Heart left ventricle (tissue), 16 donors: ENCODE measurements at regions of chr9 and their contacts with region 1.

Region 1: DNA sequence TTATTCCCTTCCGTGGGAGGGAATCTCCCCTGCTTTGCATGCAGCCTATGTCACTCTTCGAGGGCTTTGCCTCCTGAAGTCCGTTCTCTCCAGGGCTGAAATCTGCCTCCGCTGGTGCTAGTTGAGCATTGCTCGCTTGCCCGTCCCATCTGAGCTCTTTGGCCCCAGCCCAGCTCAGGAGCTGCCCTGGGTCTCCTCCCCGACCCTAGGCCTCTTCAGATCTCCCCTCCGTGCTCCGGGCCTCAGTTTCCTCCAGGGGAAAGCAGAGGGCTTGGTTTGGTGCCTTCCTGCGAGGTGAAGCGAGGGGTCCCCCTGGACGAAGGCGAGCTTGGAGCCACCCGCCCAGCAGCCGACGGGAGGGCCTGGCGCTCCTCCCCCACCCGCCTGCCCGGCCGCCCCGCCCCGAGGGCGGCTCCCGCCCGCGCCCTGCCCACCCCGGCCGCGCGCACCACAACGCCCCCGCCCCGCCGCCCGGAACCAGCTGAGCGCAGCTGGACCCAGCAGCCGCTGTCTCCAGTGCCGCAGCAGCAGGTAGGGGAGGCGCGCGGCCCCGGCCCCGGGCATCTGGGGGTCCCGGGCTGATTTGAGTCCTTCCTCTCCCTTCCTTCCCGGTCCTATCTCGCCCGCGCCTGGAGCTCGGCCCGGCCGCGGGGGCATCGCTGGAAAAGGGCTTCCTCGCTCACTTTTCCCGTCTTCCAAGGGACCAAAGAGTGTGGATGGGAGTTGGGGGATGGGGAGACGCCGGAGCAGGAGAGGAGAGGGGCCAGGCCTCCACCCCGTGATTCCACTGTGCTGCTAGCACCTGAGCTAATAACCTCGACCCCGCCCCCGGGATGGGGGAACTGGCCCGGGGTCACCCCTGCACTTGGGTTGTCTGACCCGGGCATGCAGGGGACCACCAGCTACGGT is at the start of gene GSN:
- DNase-seq: peak; percentile 88 to 94 (median 90)
- ATAC-seq: peak; percentile 65 to 92 (median 84)
- H3K4me3 ChIP-seq: peak within 1 kb of the TSS; percentile 75 to 95 (median 88)
- H3K27ac ChIP-seq: peak within 1 kb of the TSS; percentile 30 to 96 (median 88)
- H3K4me1 ChIP-seq: peaks cover 6 to 65% (median 54%) of the 10 kb centered on the region in 12 donors
- H3K27me3 ChIP-seq: no peaks in the 10 kb centered on the region
- CTCF ChIP-seq: peak in 4 of 12 donors; percentile 5 to 32 (median 8)
- POLR2A ChIP-seq: peak in 1 of 2 donors; percentile 81
- total RNA-seq, gene GSN: 422 to 2,088 (median 703) TPM

Region 2: GRCh38 chr9:121121582-121122087 is 146.3 kb before region 1 on chr9:
- intact Hi-C with region 1: no loop called
- DNase-seq: peak; percentile 96 to 99 (median 97)
- ATAC-seq: peak; percentile 100
- H3K4me3 ChIP-seq: peak overlapping the region; percentile 2 to 66 (median 54)
- H3K27ac ChIP-seq: peak overlapping the region in 11 of 12 donors; percentile 7 to 83 (median 64)
- H3K4me1 ChIP-seq: peaks cover 0 to 41% (median 10%) of the 10 kb centered on the region in 12 donors
- H3K27me3 ChIP-seq: no peaks in the 10 kb centered on the region
- CTCF ChIP-seq: peak in 10 of 12 donors; percentile 6 to 54 (median 33)
- POLR2A ChIP-seq: peak in 1 of 2 donors; percentile 65

Region 3: DNA sequence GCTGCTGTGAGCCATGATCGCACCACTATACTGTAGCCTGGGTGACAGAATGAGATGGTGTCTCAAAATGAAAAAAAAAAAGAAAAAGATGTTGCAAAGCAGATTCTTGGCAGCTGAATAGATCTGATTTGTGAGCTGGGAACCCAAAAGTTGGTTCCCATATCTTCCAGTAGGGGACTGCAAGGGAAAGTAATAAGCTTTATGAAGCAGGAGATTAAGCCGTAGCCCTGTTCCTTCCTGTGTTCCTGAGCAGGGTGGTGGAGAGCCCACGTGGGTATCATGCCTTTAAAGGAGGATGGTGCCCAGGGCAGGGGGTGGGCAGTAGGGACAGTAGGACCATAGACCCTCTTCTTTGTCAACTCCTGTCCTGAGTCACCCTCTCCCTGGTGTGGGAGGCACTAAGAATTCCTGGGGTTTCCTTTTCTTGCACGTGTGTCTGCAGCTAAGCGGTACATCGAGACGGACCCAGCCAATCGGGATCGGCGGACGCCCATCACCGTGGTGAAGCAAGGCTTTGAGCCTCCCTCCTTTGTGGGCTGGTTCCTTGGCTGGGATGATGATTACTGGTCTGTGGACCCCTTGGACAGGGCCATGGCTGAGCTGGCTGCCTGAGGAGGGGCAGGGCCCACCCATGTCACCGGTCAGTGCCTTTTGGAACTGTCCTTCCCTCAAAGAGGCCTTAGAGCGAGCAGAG is 64.2 kb after region 1 on chr9:
- intact Hi-C with region 1: no loop called
- DNase-seq: no peak
- ATAC-seq: peak in 3 of 4 donors; percentile 2 to 32 (median 11)
- H3K4me3 ChIP-seq: no peak overlapping the region
- H3K27ac ChIP-seq: peak overlapping the region in 11 of 12 donors; percentile 41 to 98 (median 71)
- H3K4me1 ChIP-seq: peaks cover 0 to 76% (median 31%) of the 10 kb centered on the region in 12 donors
- H3K27me3 ChIP-seq: no peaks in the 10 kb centered on the region
- CTCF ChIP-seq: peak in 8 of 12 donors; percentile 10 to 55 (median 30)
- POLR2A ChIP-seq: no peak

Region 4: GRCh38 chr9:121350993-121351561 is 83.1 kb after region 1 on chr9:
- intact Hi-C with region 1: no loop called
- DNase-seq: peak in 4 of 5 donors; percentile 77 to 85 (median 80)
- ATAC-seq: peak; percentile 48 to 62 (median 58)
- H3K4me3 ChIP-seq: peak overlapping the region in 1 of 12 donors; percentile 5
- H3K27ac ChIP-seq: peak overlapping the region; percentile 35 to 97 (median 90)
- H3K4me1 ChIP-seq: peaks cover 19 to 94% (median 73%) of the 10 kb centered on the region in 12 donors
- H3K27me3 ChIP-seq: no peaks in the 10 kb centered on the region
- CTCF ChIP-seq: no peak
- POLR2A ChIP-seq: no peak

Region 5: GRCh38 chr9:121383715-121384114 is 115.8 kb after region 1 on chr9:
- intact Hi-C with region 1: loop called in 1 of 10 experiments (anchors 5 kb)
- DNase-seq: no peak
- ATAC-seq: no peak
- H3K4me3 ChIP-seq: no peak overlapping the region
- H3K27ac ChIP-seq: no peak overlapping the region
- H3K4me1 ChIP-seq: no peaks in the 10 kb centered on the region
- H3K27me3 ChIP-seq: no peaks in the 10 kb centered on the region
- CTCF ChIP-seq: no peak
- POLR2A ChIP-seq: no peak

Region 6: DNA sequence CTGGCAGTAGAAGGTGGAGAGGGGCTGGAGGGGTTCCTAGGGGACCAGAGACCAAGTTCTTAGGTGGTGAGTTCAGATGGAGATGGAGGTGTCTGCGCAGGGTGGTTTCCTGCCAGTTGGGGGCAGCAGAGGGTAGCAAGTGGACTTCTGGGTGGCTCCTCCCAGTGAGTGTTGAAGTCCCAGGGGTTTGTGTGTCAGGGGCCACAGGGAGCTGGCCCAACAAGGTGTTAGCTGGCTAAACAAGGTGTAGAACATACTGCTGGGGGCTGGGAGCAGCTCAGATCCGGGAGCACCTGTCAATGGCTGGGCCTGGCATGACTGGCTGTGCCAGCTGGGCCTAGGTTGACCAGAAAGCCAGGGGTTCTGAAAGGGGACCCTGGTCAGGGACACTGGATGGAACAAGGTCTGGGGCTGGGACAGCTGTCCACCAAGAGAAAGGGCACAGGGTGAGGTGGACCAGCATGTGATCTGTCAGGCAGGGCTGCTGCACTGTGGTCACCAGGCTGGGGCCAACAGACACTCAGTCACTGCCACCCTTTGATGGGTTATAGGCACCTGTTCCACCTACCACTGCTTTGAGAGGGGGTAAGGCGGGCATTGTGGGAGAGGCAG is 419.1 kb after region 1 on chr9:
- intact Hi-C with region 1: no loop called
- DNase-seq: peak in 4 of 5 donors; percentile 71 to 84 (median 76)
- ATAC-seq: peak; percentile 56 to 72 (median 62)
- H3K4me3 ChIP-seq: no peak overlapping the region
- H3K27ac ChIP-seq: peak overlapping the region in 4 of 12 donors; percentile 14 to 42 (median 36)
- H3K4me1 ChIP-seq: peaks cover 3 to 68% (median 28%) of the 10 kb centered on the region in 12 donors
- H3K27me3 ChIP-seq: no peaks in the 10 kb centered on the region
- CTCF ChIP-seq: peak; percentile 70 to 91 (median 82)
- POLR2A ChIP-seq: no peak